Naive thymus-derived CD8-positive, alpha-beta T cell (primary cell): ENCODE measurements at regions of chr3 and their contacts with region 1.

Region 1: DNA sequence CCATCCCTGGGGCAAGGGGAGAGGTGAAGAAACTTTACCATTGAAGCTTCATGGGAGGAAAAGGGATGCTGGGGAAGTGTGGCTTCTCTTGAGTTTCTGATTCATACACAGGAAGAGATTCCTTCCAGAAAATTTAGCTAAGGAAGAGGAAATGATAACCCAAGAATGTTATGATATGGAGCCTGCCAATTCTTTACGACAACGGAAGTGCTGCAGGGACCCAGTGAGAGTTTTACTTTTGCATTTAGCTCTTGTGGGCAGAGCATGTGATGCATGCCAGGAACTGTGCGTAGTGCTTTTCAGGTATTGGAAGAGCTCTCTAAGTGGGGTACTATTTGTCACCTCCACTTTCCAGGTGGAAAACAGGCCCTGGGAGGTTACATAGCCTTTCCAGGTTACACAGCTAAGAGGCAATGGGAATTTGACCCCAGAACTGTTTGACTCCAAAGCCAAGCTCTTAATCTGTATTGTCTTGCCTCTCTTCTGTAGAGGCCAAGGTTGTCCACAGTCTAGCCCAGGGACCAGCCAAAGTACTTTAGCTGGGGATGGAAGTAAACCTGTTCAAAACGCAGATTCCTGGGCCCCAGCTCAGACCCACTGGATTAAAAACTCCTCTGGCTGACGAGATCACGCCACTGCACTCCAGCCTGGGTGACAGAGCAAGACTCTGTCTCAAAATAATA is 23.0 kb downstream of the CMTM7 start:
- DNase-seq: peak in 7 of 10 donors; percentile 39 to 72 (median 64)
- ATAC-seq: peak; percentile 82 to 96
- H3K4me3 Mint-ChIP-seq: peak overlapping the region; percentile 58 to 78 (median 68)
- H3K27ac Mint-ChIP-seq: peak overlapping the region; percentile 96 to 100 (median 98)
- H3K4me1 Mint-ChIP-seq: peaks cover 42 to 91% (median 85%) of the 10 kb centered on the region in 4 donors
- H3K27me3 Mint-ChIP-seq: no peaks in the 10 kb centered on the region

Region 2: GRCh38 chr3:32391643-32392535 is 22.8 kb before region 1 on chr3 and contains the start of gene CMTM7:
- POLR2A ChIA-PET with region 1: interaction called, 11 read pairs
- DNase-seq: peak; percentile 24 to 79 (median 54)
- ATAC-seq: peak; percentile 57 to 68
- H3K4me3 Mint-ChIP-seq: peak within 1 kb of the TSS; percentile 90 to 99 (median 96)
- H3K27ac Mint-ChIP-seq: peak within 1 kb of the TSS; percentile 96 to 100 (median 98)
- H3K4me1 Mint-ChIP-seq: peaks cover 33 to 76% (median 61%) of the 10 kb centered on the region in 4 donors
- H3K27me3 Mint-ChIP-seq: no peaks in the 10 kb centered on the region
- polyA plus RNA-seq, gene CMTM7: 67.4 to 122 (median 98.5) TPM

Region 3: DNA sequence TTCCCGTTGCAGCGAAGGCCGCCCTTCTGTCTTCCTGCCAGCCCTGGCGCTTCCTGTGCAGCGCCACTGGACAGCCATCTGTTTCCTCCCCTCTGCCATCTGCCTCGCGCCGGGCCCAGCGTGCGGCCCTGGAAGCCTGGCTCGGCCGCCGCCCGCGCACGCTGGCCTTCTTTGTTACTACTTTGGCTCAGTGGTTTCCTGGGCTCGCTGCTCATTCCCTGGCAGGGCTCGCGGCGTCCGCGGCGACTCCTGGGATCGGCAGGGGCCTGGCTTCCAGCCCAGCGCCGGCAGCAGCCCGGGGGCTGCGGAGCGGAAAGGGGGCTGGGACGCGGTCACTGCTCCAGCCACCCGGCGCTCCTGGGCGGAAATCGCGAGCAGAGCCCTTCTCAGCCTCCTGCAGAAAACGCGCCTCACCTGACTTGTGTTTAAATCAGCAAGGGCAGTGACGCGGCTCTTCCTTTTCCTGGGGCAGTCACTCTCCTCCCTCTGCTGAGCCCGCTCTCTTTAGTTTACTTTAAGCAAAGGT is 13.0 kb before region 1 on chr3:
- POLR2A ChIA-PET with region 1: interaction called, 52 read pairs
- DNase-seq: peak; percentile 37 to 81 (median 62)
- ATAC-seq: peak; percentile 70 to 78
- H3K4me3 Mint-ChIP-seq: peak overlapping the region; percentile 86 to 96 (median 94)
- H3K27ac Mint-ChIP-seq: peak overlapping the region; percentile 97 to 100 (median 99)
- H3K4me1 Mint-ChIP-seq: peaks cover 33 to 85% (median 83%) of the 10 kb centered on the region in 4 donors
- H3K27me3 Mint-ChIP-seq: no peaks in the 10 kb centered on the region

Region 4: DNA sequence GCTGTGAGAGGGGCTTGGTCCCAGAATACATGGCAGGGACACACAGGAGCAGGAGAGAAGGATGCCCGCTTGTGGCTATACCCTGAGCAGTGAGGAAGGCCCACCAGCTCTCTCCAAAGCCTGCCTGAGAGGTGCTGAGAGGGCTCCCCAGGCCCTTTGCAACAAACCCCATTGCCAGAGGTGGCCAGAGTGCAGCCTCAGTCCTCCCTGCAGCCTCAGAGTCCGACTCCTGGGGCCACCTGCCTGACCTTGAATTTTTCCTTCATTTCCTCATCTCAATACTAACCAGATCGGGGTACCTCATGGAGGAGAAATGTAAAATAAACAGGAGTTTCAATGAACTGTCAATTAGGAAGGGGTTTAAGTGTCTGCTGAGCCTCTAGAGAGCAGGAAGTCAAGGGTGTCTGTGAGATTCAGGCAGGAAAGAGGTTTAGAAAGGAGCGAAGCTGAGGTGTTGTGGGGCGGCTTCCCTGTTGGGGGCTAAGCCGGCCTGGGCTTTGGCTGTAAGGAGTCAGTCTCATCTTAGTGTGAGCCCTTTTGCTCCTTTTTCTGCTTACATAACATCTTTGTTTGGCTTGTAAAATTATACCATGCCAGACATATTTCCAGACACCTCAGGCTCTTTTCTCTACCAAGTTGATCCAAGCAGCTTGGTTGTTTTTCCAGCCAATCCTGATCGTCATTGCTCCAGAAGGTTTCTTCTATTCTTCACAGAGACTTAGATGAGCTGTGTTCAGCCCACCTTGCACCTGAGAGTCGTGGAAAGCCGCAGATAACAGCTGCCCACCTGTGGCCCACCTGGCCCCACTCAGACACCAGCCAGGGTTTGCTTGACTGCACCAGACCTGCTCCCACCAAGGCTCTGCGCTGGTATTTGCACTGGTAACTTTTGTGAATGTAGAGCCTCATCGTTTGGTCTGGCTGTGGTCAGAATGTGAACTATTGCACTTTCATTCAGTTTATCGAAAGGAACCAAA is 13.7 kb after region 1 on chr3:
- POLR2A ChIA-PET with region 1: interaction called, 99 read pairs
- DNase-seq: peak in 8 of 10 donors; percentile 21 to 68 (median 53)
- ATAC-seq: peak; percentile 56 to 63
- H3K4me3 Mint-ChIP-seq: peak overlapping the region; percentile 53 to 84 (median 77)
- H3K27ac Mint-ChIP-seq: peak overlapping the region; percentile 96 to 100 (median 98)
- H3K4me1 Mint-ChIP-seq: peaks cover 42 to 96% (median 95%) of the 10 kb centered on the region in 4 donors
- H3K27me3 Mint-ChIP-seq: no peaks in the 10 kb centered on the region